Mammary epithelial cell (primary cell): ENCODE measurements at regions of chr11 and their contacts with region 1.

Region 1: DNA sequence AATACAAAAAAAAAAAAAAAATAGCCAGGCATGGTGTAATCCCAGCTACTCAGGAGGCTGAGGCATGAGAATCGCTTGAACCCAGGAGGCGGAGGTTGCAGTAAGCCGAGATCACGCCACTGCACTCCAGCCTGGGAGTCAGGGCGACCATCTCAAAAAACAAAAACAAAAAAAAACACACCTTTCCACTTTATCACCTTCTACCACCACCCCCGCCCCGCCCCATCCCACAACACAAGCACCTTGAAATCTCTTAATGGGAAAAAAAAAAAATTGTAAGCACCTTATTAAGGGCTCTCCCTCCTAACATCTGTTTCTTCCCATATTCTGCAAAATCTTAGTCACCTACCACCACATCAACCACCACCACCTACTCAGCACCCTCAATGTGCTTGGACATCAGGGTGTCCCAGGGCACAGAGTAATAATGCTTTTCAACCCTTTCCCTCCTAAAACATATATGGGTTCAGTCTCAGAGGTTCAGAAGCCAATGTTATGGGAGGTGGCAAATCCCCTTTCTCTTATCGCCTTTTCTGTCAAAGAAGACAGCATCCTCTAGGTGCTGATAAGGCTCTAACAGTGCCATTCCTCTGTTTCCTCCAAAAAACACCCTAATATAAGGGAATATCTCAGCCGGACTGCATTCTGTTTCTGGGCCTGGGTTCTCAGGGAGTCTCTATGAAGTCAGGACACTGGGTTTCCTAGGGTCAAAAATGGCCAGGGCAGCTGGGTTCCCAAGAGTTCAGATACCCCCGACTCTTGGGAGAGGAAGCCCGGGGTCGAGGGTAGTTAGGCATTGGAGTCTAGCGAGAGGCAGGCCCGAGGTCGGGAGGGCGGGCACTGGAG is 718 bp downstream of the INTS5 start:
- DNase-seq: no peak
- H3K4me3 ChIP-seq: peak overlapping the region; percentile 78 to 95 (median 90)
- H3K27ac ChIP-seq: peak overlapping the region; percentile 80
- H3K4me1 ChIP-seq: peaks cover 6% of the 10 kb centered on the region
- H3K27me3 ChIP-seq: no peaks in the 10 kb centered on the region
- CTCF ChIP-seq: no peak

Region 2: DNA sequence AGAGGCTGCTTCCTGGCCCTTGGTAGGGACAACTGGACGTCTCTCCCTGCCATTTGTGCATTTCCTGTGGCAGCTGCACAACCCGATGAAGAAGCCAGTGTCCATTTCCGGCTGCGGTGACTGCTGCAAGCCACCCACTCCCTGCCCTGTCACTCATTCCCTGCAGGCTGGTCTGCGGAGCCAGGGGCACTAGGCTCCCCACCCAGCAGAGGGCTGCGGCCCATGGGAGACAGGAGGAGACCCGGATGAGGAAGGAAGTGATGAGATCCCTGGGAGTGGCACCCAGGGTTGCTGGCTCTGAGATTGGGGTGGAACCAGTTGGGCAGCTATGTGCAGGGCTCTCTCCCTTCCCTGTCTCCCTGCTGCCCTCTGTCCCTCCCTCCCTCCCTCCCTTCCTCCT is 910.0 kb before region 1 on chr11:
- CTCF ChIA-PET with region 1: no interaction called
- dilution Hi-C with region 1: no loop called
- in situ Hi-C with region 1: no loop called
- intact Hi-C with region 1: no loop called
- DNase-seq: no peak
- H3K4me3 ChIP-seq: no peak overlapping the region
- H3K27ac ChIP-seq: no peak overlapping the region
- H3K4me1 ChIP-seq: no peaks in the 10 kb centered on the region
- H3K27me3 ChIP-seq: no peaks in the 10 kb centered on the region
- CTCF ChIP-seq: no peak

Region 3: GRCh38 chr11:62601394-62602140 is 50.8 kb before region 1 on chr11 and contains the start of gene MTA2:
- CTCF ChIA-PET with region 1: no interaction called
- dilution Hi-C with region 1: loop called (anchors 5 kb)
- in situ Hi-C with region 1: no loop called
- intact Hi-C with region 1: loop called (anchors 2 kb)
- DNase-seq: peak; percentile 99
- H3K4me3 ChIP-seq: peak within 1 kb of the TSS; percentile 68 to 88 (median 78)
- H3K27ac ChIP-seq: peak within 1 kb of the TSS; percentile 66
- H3K4me1 ChIP-seq: peaks cover 30% of the 10 kb centered on the region
- H3K27me3 ChIP-seq: no peaks in the 10 kb centered on the region
- CTCF ChIP-seq: no peak
- total RNA-seq, gene MTA2: 157 to 169 TPM

Region 4: DNA sequence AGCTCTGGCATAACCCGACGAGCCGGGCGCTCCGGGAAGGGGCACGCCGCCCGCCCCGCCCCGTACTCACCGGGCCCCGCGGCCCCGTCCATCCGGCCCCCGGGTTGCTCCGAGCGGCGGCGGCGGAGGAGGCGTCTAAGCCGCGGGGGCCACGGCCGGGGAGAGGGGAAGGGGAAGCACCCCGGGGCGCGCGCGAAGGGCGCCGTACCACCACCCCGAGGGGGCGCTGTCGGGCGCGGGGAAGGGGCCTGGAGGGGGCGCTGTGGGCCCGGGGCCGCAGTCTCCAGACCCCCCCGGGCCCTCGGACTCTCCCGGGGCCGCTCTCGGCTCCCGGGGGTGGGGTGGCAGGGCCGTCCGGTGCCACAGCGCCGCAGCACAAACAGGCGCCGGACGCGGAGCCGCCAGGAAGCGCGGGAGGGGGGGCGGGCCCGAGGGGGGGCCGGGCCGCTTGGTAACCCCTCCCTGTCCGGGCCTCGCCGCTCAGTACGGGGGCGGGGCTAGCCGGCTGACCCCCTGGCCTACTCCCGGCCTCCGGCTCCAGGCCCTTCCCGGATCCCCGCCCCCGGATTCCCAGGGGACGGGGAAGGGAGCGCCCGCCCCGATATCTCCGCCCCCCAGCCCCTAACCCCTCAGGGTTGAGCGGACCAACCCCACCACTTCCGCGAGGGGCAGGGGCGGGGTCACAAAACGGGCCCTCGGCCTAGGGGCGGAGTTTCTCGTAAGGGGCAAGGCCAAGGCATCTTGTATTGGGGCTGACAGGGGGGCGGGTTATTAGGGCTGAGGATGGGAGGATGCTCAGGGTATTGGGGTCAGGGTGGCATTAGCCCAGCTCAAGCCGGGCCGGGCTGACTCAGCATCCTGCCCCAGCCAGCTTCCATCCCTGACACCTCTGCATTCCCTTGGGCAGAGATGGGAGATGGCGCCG is 39.8 kb before region 1 on chr11 and contains the starts of genes EML3 and ROM1:
- CTCF ChIA-PET with region 1: no interaction called
- dilution Hi-C with region 1: loop called (anchors 5 kb)
- in situ Hi-C with region 1: no loop called
- intact Hi-C with region 1: loop called (anchors 5 kb)
- DNase-seq: peak; percentile 75
- H3K4me3 ChIP-seq: peak within 1 kb of the TSS; percentile 72 to 84 (median 76)
- H3K27ac ChIP-seq: peak within 1 kb of the TSS; percentile 56
- H3K4me1 ChIP-seq: peaks cover 33% of the 10 kb centered on the region
- H3K27me3 ChIP-seq: no peaks in the 10 kb centered on the region
- CTCF ChIP-seq: peak; percentile 38 to 88
- total RNA-seq, gene EML3: 21.0 to 46.6 TPM
- total RNA-seq, gene ROM1: 2.3 TPM

Region 5: DNA sequence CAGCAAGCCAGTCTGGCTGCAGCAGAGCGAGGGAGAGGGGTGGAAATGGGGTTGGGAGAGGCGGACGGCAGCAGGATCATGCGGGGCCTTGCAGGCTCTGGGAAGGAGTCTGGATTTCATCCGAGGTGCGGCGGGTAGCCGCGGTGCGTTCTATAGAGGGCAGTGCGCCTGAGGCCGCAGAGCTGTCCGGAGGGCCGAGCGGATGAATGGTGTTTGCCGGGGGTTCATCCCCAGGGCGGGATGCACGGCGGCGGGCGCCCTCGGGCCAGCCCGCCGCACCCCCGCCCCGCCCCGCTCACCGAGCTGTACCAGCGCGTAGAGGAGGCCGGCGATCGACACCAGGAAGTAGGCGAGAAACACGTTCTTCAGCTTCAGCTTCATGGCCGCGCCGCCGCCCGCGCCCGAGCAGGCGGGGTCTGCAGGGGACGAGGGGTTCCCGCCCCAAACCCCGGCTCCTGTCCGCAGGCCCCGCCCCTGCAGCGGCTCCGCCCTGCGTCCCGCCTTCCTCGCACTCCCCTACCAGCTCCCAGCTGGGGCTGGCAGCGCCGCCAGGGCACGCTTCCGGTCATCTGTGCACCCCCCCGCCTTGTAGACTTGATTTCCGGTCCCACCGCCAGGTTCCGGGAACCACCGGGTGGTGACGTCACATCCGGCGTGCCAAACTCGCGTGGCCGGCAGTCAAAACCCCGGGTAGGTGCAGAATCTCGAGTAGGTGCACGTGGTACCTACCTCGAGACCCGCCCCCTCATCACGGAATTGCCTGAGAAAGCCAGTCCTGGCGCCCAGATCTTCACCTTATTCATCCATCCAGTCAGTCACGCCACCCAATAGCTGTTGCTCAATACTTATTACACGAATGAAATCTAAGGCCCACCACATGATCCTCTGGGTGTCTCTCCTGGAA is 30.6 kb before region 1 on chr11 and contains the start of gene B3GAT3:
- CTCF ChIA-PET with region 1: no interaction called
- dilution Hi-C with region 1: no loop called
- in situ Hi-C with region 1: no loop called
- intact Hi-C with region 1: loop called (anchors 1 kb)
- DNase-seq: peak; percentile 99
- H3K4me3 ChIP-seq: peak within 1 kb of the TSS; percentile 71 to 78 (median 72)
- H3K27ac ChIP-seq: peak within 1 kb of the TSS; percentile 83
- H3K4me1 ChIP-seq: peaks cover 27% of the 10 kb centered on the region
- H3K27me3 ChIP-seq: no peaks in the 10 kb centered on the region
- CTCF ChIP-seq: no peak
- total RNA-seq, gene B3GAT3: 37.8 to 42.0 TPM

Region 6: DNA sequence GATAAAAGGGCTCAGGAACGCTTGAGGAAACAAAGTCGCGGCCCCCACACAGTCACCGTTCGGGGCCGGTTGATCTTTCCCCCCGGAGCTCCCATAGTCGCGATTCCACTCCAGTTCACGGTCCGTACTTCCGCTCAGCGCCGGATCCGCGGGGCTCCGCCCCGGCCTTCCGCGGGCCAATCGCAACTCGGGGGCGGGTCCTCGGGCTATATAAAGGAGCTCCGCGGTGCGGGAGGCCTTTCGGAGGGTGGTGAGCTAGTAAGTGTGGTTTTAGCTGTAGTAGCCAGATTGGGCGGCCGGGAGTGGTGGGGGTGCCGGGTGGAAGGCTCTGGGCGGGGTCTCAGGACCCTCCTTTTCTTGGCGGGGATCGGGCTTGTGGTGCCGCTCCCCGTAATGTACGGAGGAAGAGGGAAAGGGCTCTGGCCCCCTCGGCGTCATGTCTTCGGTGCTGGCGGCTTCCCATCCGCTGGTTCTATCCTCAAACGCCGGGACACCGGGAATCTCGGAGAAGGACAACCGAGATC is 12.8 kb after region 1 on chr11 and contains the starts of genes C11orf98 and CSKMT:
- CTCF ChIA-PET with region 1: no interaction called
- dilution Hi-C with region 1: no loop called
- in situ Hi-C with region 1: no loop called
- intact Hi-C with region 1: loop called (anchors 1 kb)
- DNase-seq: peak; percentile 91
- H3K4me3 ChIP-seq: peak within 1 kb of the TSS; percentile 58 to 96 (median 83)
- H3K27ac ChIP-seq: peak within 1 kb of the TSS; percentile 65
- H3K4me1 ChIP-seq: peaks cover 15% of the 10 kb centered on the region
- H3K27me3 ChIP-seq: no peaks in the 10 kb centered on the region
- CTCF ChIP-seq: no peak
- total RNA-seq, gene C11orf98: 18.0 to 68.3 TPM
- total RNA-seq, gene CSKMT: 2.2 to 18.2 TPM

Region 7: GRCh38 chr11:62671575-62672389 is 19.4 kb after region 1 on chr11 and contains the starts of genes LBHD1 and UQCC3:
- CTCF ChIA-PET with region 1: no interaction called
- dilution Hi-C with region 1: no loop called
- in situ Hi-C with region 1: no loop called
- intact Hi-C with region 1: loop called (anchors 2 kb)
- DNase-seq: peak; percentile 85
- H3K4me3 ChIP-seq: peak within 1 kb of the TSS; percentile 58 to 94 (median 72)
- H3K27ac ChIP-seq: peak within 1 kb of the TSS; percentile 62
- H3K4me1 ChIP-seq: peaks cover 19% of the 10 kb centered on the region
- H3K27me3 ChIP-seq: no peaks in the 10 kb centered on the region
- CTCF ChIP-seq: no peak
- total RNA-seq, gene LBHD1: 5.3 to 8.7 TPM
- total RNA-seq, gene UQCC3: 4.0 to 11.5 TPM

Region 8: DNA sequence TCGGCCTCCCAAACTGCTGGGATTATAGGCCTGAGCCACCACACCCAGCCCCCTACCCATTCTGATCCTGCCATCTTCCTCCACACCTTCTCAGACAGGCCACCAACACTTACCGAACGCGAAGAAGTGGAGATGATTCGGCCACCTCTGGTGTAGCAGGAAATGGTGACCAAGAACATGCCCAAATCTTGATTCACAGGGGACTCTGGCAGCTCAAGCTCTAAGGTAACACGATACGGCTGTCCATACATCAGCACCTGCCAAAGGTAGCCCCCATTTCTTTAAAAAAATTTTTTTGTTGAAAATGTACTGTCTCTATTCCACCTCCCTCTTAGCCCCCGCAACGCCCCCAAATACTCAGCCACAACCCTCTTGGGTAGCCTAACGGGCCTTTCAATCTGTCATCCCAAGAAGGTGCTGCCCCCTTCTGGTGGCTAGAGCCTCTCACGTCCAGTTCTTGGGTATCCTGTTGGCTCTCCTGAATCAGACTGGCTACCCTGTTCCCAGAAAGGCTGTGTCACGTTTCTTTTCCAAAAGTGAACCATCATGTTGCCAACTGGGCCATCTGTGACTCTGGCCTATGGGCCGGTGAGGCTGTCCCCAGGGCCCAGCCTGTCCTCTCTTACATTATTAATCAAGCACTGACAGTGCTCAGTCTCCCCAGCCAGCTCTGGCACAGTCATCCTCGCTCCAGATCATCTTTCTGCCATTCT is 42.2 kb after region 1 on chr11:
- CTCF ChIA-PET with region 1: no interaction called
- dilution Hi-C with region 1: loop called (anchors 5 kb)
- in situ Hi-C with region 1: no loop called
- intact Hi-C with region 1: no loop called
- DNase-seq: peak; percentile 52
- H3K4me3 ChIP-seq: no peak overlapping the region
- H3K27ac ChIP-seq: no peak overlapping the region
- H3K4me1 ChIP-seq: no peaks in the 10 kb centered on the region
- H3K27me3 ChIP-seq: no peaks in the 10 kb centered on the region
- CTCF ChIP-seq: peak; percentile 79 to 87

Region 9: GRCh38 chr11:62896049-62896448 is 243.7 kb after region 1 on chr11:
- CTCF ChIA-PET with region 1: no interaction called
- dilution Hi-C with region 1: no loop called
- in situ Hi-C with region 1: no loop called
- intact Hi-C with region 1: no loop called
- DNase-seq: no peak
- H3K4me3 ChIP-seq: no peak overlapping the region
- H3K27ac ChIP-seq: no peak overlapping the region
- H3K4me1 ChIP-seq: no peaks in the 10 kb centered on the region
- H3K27me3 ChIP-seq: no peaks in the 10 kb centered on the region
- CTCF ChIP-seq: no peak

Region 10: DNA sequence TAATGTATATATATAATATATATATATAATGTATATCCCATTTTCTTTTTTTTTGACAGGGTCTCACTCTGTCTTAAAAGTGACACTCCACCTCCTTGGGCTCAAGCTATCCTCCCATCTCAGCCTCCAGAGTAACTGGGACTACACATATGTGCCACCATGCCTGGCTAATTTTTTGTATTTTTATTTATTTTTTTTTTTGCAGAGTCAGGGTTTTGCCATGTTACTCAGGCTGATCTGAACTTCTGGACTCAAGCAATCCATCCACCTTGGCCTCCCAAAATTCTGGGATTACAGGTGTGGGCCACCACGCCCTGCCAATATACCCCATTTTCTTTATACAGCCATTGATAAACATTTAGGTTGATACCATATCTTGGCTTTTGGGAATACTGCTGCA is 525.5 kb after region 1 on chr11:
- CTCF ChIA-PET with region 1: no interaction called
- dilution Hi-C with region 1: no loop called
- in situ Hi-C with region 1: no loop called
- intact Hi-C with region 1: no loop called
- DNase-seq: no peak
- H3K4me3 ChIP-seq: no peak overlapping the region
- H3K27ac ChIP-seq: no peak overlapping the region
- H3K4me1 ChIP-seq: no peaks in the 10 kb centered on the region
- H3K27me3 ChIP-seq: no peaks in the 10 kb centered on the region
- CTCF ChIP-seq: no peak